A673 (cell line): ENCODE measurements at regions of chr16 and their contacts with region 1.

Region 1: DNA sequence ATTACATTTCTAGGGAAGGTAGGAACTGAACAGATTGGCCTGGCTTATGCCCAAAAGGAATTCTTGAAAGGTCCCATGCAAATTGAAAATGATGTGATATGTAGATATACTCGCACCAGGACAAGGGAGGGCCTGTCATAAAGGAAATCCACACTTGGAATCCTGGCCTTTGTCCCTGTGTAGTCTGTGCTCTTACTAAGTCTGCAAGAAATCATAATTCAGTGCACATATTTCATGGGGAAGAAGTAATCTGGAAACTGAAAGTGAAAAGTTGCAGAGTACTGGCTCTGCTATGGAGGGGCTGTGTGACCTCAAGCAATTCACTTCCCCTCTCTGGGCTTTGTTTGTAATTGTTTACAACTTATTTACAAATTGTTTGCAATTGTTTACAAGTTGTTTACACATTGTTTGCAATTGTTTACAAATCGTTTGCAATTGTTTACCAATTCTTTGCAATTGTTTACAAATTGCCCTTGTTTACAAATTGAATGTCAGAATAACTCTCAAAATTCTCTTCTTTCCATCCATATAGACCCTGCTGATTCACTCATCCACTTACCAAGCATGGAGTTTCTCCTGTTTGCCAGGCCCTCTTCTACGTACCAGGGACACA is 12.9 kb downstream of the SCNN1G start:
- DNase-seq: no peak
- H3K4me3 ChIP-seq: no peak overlapping the region
- H3K27ac ChIP-seq: no peak overlapping the region
- H3K4me1 ChIP-seq: no peaks in the 10 kb centered on the region
- H3K27me3 ChIP-seq: no peaks in the 10 kb centered on the region
- CTCF ChIP-seq: no peak

Region 2: GRCh38 chr16:23274969-23275368 is 79.5 kb after region 1 on chr16:
- CTCF ChIA-PET with region 1: interaction called, 10 read pairs
- POLR2A ChIA-PET with region 1: no interaction called
- intact Hi-C with region 1: no loop called
- DNase-seq: peak; percentile 38
- H3K4me3 ChIP-seq: no peak overlapping the region
- H3K27ac ChIP-seq: no peak overlapping the region
- H3K4me1 ChIP-seq: peaks cover 4% of the 10 kb centered on the region
- H3K27me3 ChIP-seq: no peaks in the 10 kb centered on the region
- CTCF ChIP-seq: no peak

Region 3: DNA sequence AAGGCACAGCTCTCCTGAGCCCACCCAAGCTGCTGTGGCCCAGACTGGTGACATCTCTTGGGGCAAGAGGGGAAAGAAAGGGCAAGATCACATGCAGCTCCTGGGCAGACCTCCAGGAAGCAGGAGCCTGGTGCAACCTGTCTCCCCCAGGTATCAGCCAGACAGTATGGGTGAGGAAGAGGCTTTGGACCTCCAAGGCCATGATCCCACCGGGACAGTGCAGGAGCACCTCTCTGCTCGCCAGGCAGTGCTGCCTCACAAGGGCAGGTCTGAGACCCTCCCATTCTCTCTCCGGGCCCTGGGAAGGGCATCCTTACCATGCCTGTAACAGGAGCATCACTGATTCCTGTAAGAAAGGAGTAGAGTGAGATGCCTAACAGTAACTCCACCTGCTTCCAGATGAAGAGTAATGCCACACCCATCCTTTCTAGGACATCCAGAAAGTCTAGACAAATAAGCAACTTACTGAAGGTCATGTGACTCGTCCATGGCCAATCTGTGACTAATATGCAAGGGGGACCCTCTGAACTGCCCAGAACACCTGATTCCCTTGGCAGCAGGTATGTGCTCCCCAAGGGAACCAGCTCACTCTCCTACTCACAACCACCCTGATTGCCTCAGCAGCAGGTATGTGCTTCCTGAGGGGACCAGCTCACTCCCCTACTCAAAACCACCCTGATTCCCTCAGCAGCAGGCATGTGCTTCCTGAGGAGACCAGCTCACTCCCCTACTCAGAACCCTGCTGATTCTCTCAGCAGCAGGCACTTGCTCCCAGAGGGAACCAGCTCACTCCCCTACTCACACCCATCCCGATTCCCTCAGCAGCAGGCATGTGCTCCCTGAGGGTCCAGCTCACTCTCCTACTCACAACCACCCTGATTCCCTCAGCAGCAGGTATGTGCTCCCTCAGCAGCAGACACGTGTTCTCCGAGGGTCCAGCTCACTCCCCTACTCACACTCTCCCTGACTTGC is 283.4 kb after region 1 on chr16:
- CTCF ChIA-PET with region 1: no interaction called
- POLR2A ChIA-PET with region 1: no interaction called
- intact Hi-C with region 1: no loop called
- DNase-seq: no peak
- H3K4me3 ChIP-seq: no peak overlapping the region
- H3K27ac ChIP-seq: no peak overlapping the region
- H3K4me1 ChIP-seq: no peaks in the 10 kb centered on the region
- H3K27me3 ChIP-seq: no peaks in the 10 kb centered on the region
- CTCF ChIP-seq: no peak

Region 4: DNA sequence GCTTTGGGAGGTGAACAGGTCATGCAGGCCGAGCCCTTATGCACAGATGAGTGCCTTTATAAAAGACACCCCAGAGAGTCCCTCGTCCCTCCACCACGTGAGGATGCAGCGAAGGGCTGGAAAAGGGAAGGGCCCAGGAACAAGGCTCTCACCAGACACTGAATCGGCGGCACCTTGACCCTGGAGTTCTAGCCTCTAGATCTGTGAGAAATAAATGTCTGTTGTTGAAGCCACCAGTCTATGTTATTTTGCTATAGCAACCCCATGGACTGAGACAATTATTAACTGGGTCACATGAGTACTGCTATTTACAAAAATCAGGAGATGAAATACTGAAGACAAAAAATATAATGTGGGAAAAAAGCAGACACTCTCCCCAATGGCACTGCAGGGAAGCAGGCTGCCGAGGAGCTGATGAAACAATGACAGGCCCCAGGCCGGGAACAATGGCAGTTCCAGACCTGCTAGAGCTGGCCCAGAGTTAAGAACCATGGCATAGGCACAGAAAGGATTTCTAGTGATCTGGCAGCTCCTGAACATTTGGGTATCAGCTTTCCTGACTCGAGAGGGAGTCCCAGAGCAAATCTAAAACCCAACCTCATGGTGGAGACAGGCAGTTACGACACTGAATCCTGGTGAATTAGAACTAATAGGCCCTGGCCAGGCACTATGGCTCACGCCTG is 332.6 kb after region 1 on chr16:
- CTCF ChIA-PET with region 1: no interaction called
- POLR2A ChIA-PET with region 1: no interaction called
- intact Hi-C with region 1: no loop called
- DNase-seq: no peak
- H3K4me3 ChIP-seq: no peak overlapping the region
- H3K27ac ChIP-seq: no peak overlapping the region
- H3K4me1 ChIP-seq: no peaks in the 10 kb centered on the region
- H3K27me3 ChIP-seq: no peaks in the 10 kb centered on the region
- CTCF ChIP-seq: no peak